A673 (cell line): ENCODE measurements at regions of chr12 and their contacts with region 1.

Region 1: DNA sequence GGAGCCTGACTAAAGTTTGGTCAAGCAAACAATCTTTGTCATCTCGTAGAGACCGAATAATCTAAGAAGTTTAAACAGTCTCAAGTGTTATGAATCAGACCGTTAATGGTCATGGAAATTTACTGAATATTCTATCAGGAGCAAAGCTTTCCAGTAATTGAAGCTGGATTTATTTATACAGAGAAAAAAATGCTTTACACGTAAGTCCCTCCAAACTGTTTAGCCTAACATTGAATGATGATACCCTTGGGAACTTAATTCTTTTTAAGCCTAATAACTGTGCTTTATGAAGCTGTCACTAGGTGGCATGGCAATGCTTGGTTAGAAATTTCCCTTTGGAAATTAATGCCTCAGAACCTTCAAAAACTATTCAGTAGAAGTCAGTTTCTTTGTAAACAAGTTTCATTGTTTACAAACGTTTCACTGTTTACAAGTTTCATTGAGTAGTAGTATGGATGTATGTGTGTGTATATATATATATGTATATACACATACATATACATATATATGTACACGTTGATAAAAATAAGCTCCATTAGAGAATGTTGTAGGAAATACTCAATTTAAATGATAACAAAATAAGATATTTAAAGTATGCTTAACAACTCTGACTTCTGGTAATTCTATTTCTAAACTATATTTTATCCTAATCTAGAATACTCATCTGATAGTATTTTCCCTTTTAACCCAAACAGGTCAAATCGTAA is 32.1 kb downstream of the DEPDC4 start:
- DNase-seq: peak; percentile 72
- H3K4me3 ChIP-seq: no peak overlapping the region
- H3K27ac ChIP-seq: no peak overlapping the region
- H3K4me1 ChIP-seq: no peaks in the 10 kb centered on the region
- H3K27me3 ChIP-seq: no peaks in the 10 kb centered on the region
- CTCF ChIP-seq: peak; percentile 79

Region 2: GRCh38 chr12:100329800-100330199 is 95.0 kb after region 1 on chr12:
- CTCF ChIA-PET with region 1: no interaction called
- POLR2A ChIA-PET with region 1: no interaction called
- intact Hi-C with region 1: no loop called
- DNase-seq: no peak
- H3K4me3 ChIP-seq: no peak overlapping the region
- H3K27ac ChIP-seq: no peak overlapping the region
- H3K4me1 ChIP-seq: no peaks in the 10 kb centered on the region
- H3K27me3 ChIP-seq: no peaks in the 10 kb centered on the region
- CTCF ChIP-seq: no peak

Region 3: GRCh38 chr12:100404769-100405407 is 170.1 kb after region 1 on chr12:
- CTCF ChIA-PET with region 1: interaction called, 18 read pairs
- POLR2A ChIA-PET with region 1: no interaction called
- intact Hi-C with region 1: loop called (anchors 2 kb)
- DNase-seq: peak; percentile 66
- H3K4me3 ChIP-seq: no peak overlapping the region
- H3K27ac ChIP-seq: no peak overlapping the region
- H3K4me1 ChIP-seq: no peaks in the 10 kb centered on the region
- H3K27me3 ChIP-seq: no peaks in the 10 kb centered on the region
- CTCF ChIP-seq: peak; percentile 75

Region 4: GRCh38 chr12:100453951-100454350 is 219.2 kb after region 1 on chr12:
- CTCF ChIA-PET with region 1: no interaction called
- POLR2A ChIA-PET with region 1: no interaction called
- intact Hi-C with region 1: no loop called
- DNase-seq: no peak
- H3K4me3 ChIP-seq: no peak overlapping the region
- H3K27ac ChIP-seq: no peak overlapping the region
- H3K4me1 ChIP-seq: no peaks in the 10 kb centered on the region
- H3K27me3 ChIP-seq: no peaks in the 10 kb centered on the region
- CTCF ChIP-seq: no peak

Region 5: DNA sequence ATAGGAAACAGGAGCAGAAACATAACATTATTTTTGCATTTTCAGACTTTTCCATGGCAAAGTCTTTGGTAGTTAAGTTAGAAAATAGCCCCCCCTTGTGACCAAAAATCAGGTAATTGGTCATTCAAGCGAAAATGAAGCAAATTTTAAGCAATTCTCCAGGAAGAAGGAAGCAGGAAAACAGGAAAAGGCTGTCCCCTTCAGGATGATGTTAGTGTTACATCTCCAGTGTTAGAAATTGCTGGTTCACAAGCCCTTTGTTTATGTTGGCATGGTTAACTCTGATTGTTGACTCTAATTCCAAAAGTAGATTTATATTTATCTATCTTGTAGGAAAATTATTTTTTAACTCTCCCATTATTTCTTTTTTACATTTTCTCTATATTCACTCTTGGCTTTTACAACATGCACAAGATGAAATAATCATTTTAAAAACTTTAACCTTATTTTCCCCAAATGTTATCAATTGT is 319.9 kb after region 1 on chr12:
- CTCF ChIA-PET with region 1: interaction called, 3 read pairs
- POLR2A ChIA-PET with region 1: no interaction called
- intact Hi-C with region 1: loop called (anchors 1 kb)
- DNase-seq: peak; percentile 80
- H3K4me3 ChIP-seq: no peak overlapping the region
- H3K27ac ChIP-seq: no peak overlapping the region
- H3K4me1 ChIP-seq: peaks cover 5% of the 10 kb centered on the region
- H3K27me3 ChIP-seq: no peaks in the 10 kb centered on the region
- CTCF ChIP-seq: peak; percentile 76

Region 6: GRCh38 chr12:100668945-100669536 is 434.3 kb after region 1 on chr12:
- CTCF ChIA-PET with region 1: interaction called, 4 read pairs
- POLR2A ChIA-PET with region 1: no interaction called
- intact Hi-C with region 1: loop called (anchors 5 kb)
- DNase-seq: peak; percentile 75
- H3K4me3 ChIP-seq: no peak overlapping the region
- H3K27ac ChIP-seq: no peak overlapping the region
- H3K4me1 ChIP-seq: no peaks in the 10 kb centered on the region
- H3K27me3 ChIP-seq: no peaks in the 10 kb centered on the region
- CTCF ChIP-seq: peak; percentile 98

Region 7: GRCh38 chr12:100733817-100734593 is 499.3 kb after region 1 on chr12:
- CTCF ChIA-PET with region 1: no interaction called
- POLR2A ChIA-PET with region 1: no interaction called
- intact Hi-C with region 1: loop called (anchors 2 kb)
- DNase-seq: peak; percentile 59
- H3K4me3 ChIP-seq: no peak overlapping the region
- H3K27ac ChIP-seq: no peak overlapping the region
- H3K4me1 ChIP-seq: no peaks in the 10 kb centered on the region
- H3K27me3 ChIP-seq: peaks cover 6% of the 10 kb centered on the region
- CTCF ChIP-seq: peak; percentile 72